ENCODE measurements at regions of chr5 and their contacts with region 1.

Region 1: GRCh38 chr5:154520861-154521453 is 42.9 kb upstream of the HAND1 start:
- DNase-seq: peak; percentile 91
- ATAC-seq: peak; percentile 95
- H3K4me3 Mint-ChIP-seq: peak overlapping the region; percentile 77
- H3K27ac Mint-ChIP-seq: peak overlapping the region; percentile 92
- H3K4me1 Mint-ChIP-seq: peaks cover 22% of the 10 kb centered on the region
- H3K27me3 Mint-ChIP-seq: peaks cover 32% of the 10 kb centered on the region
- CTCF ChIP-seq: peak; percentile 79

Region 2: GRCh38 chr5:154461531-154461930 is 59.4 kb before region 1 on chr5:
- CTCF ChIA-PET with region 1: interaction called, 31 read pairs
- POLR2A ChIA-PET with region 1: interaction called, 3 read pairs
- DNase-seq: peak; percentile 49
- ATAC-seq: peak; percentile 93
- H3K4me3 Mint-ChIP-seq: no peak overlapping the region
- H3K27ac Mint-ChIP-seq: 0 out of 2 replicates have a peak overlapping the region, but pooled peaks have one; percentile 41
- H3K4me1 Mint-ChIP-seq: peaks cover 7% of the 10 kb centered on the region
- H3K27me3 Mint-ChIP-seq: peaks cover 7% of the 10 kb centered on the region
- CTCF ChIP-seq: no peak

Region 3: DNA sequence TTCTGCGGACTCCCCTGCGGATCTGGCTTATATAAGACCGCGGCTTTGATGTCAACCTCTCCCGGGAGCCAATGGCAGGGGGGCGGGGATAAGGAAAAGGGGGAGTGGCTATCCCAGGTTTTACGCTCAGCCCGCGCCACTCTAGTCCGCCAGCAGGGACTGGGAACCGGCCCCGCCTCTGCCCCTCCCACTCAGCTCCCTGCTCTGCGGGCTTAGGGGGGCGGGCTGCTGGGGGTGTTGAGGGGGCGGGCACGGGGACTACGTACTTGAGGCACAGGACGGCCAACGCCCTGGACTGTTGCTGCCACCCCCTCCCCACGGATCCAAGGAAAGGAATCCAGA is 42.8 kb before region 1 on chr5 and contains the start of gene HAND1:
- CTCF ChIA-PET with region 1: interaction called, 18 read pairs
- POLR2A ChIA-PET with region 1: no interaction called
- DNase-seq: peak; percentile 92
- ATAC-seq: peak; percentile 65
- H3K4me3 Mint-ChIP-seq: peak within 1 kb of the TSS; percentile 63
- H3K27ac Mint-ChIP-seq: no peak within 1 kb of the TSS
- H3K4me1 Mint-ChIP-seq: peaks cover 72% of the 10 kb centered on the region
- H3K27me3 Mint-ChIP-seq: peaks cover 100% of the 10 kb centered on the region
- CTCF ChIP-seq: no peak
- total RNA-seq, gene HAND1: not detected in 3 replicates

Region 4: GRCh38 chr5:154541553-154541952 is 20.6 kb after region 1 on chr5:
- CTCF ChIA-PET with region 1: interaction called, 22 read pairs
- POLR2A ChIA-PET with region 1: no interaction called
- DNase-seq: peak; percentile 40
- ATAC-seq: peak; percentile 72
- H3K4me3 Mint-ChIP-seq: peak overlapping the region; percentile 40; the same call in 1 of the 2 replicates
- H3K27ac Mint-ChIP-seq: no peak overlapping the region
- H3K4me1 Mint-ChIP-seq: peaks cover 15% of the 10 kb centered on the region
- H3K27me3 Mint-ChIP-seq: peaks cover 17% of the 10 kb centered on the region
- CTCF ChIP-seq: no peak

Region 5: GRCh38 chr5:154603978-154604679 is 83.2 kb after region 1 on chr5:
- CTCF ChIA-PET with region 1: interaction called, 82 read pairs
- POLR2A ChIA-PET with region 1: interaction called, 3 read pairs
- DNase-seq: peak; percentile 26
- ATAC-seq: peak; percentile 40
- H3K4me3 Mint-ChIP-seq: peak overlapping the region; percentile 18; the same call in 1 of the 2 replicates
- H3K27ac Mint-ChIP-seq: no peak overlapping the region
- H3K4me1 Mint-ChIP-seq: peaks cover 25% of the 10 kb centered on the region
- H3K27me3 Mint-ChIP-seq: peaks cover 41% of the 10 kb centered on the region
- CTCF ChIP-seq: no peak